Activated B cell treated with CpG ODN at 0.5 μM for 24 hours (primary cell): ENCODE measurements at regions of chr4 and their contacts with region 1.

Region 1: GRCh38 chr4:85423431-85423830 is 51.5 kb upstream of the ARHGAP24 start:
- DNase-seq: no peak
- ATAC-seq: peak; percentile 73
- H3K4me3 Mint-ChIP-seq: no peak overlapping the region
- H3K27ac Mint-ChIP-seq: no peak overlapping the region
- H3K4me1 Mint-ChIP-seq: peaks cover 16% of the 10 kb centered on the region
- H3K27me3 Mint-ChIP-seq: no peaks in the 10 kb centered on the region
- CTCF ChIP-seq: no peak

Region 2: DNA sequence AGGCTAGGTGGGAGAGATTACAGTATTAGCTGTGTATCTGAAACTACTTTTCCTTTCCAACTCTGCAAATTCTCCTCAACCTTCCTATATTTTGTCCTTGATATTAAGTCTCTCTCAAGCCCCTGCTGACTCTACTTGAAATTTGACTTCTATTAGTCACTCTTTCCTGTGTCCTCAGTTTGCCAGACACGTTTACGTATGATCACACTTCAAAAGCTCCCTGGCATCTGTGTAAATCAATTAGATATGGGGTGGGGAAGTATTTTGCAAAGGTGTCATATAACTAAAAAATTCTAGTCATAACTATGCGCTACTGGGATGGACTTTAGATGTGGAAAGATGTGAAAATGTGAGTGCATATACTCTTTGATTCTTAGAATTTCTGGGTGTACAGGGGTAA is 15.9 kb before region 1 on chr4:
- CTCF ChIA-PET with region 1: no interaction called
- POLR2A ChIA-PET with region 1: interaction called, 3 read pairs
- intact Hi-C with region 1: loop called (anchors 2 kb)
- DNase-seq: no peak
- ATAC-seq: no peak
- H3K4me3 Mint-ChIP-seq: no peak overlapping the region
- H3K27ac Mint-ChIP-seq: no peak overlapping the region
- H3K4me1 Mint-ChIP-seq: no peaks in the 10 kb centered on the region
- H3K27me3 Mint-ChIP-seq: no peaks in the 10 kb centered on the region
- CTCF ChIP-seq: no peak

Region 3: DNA sequence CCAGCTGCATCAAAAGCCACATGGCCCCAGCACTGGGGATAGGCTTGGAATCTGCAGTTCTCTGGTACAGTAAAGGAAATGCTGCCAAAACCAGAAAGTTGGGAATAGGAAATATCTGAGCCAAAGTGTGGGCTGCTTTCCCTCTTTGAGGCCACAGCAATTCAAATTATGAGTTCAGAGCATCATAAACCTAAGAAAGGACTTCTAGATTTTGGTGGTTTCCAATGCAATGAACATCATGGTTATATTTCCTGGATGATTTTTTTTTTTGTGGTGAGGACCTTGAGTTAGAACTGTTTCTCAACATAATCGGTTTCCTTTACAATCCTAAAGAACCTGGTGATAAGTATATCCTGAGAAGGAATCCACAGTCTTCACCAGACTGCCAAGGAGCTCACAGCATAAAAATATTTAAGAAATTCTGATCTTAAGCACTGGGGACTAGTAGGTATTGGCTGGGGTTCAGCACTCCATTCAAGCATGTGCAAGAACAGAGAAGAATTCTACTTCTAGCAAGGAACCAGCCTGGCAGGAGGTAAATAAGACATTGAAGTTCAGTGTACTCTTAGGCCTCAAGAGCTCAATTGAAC is 21.7 kb after region 1 on chr4:
- CTCF ChIA-PET with region 1: no interaction called
- POLR2A ChIA-PET with region 1: no interaction called
- intact Hi-C with region 1: no loop called
- DNase-seq: no peak
- ATAC-seq: no peak
- H3K4me3 Mint-ChIP-seq: no peak overlapping the region
- H3K27ac Mint-ChIP-seq: no peak overlapping the region
- H3K4me1 Mint-ChIP-seq: peaks cover 38% of the 10 kb centered on the region
- H3K27me3 Mint-ChIP-seq: no peaks in the 10 kb centered on the region
- CTCF ChIP-seq: no peak

Region 4: DNA sequence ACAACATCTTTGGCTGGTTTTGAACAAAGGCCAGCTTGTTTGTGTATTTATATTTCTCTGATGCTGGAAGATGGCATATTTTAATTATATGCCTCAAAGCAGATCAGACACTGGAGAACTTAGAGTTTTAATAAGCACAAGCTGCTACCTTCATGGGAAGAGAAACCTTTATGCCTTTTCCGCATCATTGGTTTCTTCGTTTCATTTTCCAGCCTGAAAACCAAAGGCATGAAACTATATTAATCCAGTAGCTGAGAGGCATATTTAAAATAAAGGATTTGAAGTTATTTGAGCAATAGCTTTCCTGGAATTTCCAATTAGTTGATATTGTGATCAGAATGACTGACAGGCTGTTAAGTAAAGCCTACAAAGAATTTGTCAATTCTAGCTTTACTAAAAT is 192.5 kb after region 1 on chr4:
- CTCF ChIA-PET with region 1: no interaction called
- POLR2A ChIA-PET with region 1: no interaction called
- intact Hi-C with region 1: no loop called
- DNase-seq: no peak
- ATAC-seq: no peak
- H3K4me3 Mint-ChIP-seq: no peak overlapping the region
- H3K27ac Mint-ChIP-seq: no peak overlapping the region
- H3K4me1 Mint-ChIP-seq: peaks cover 15% of the 10 kb centered on the region
- H3K27me3 Mint-ChIP-seq: no peaks in the 10 kb centered on the region
- CTCF ChIP-seq: no peak

Region 5: GRCh38 chr4:85790582-85790981 is 367.2 kb after region 1 on chr4:
- CTCF ChIA-PET with region 1: no interaction called
- POLR2A ChIA-PET with region 1: no interaction called
- intact Hi-C with region 1: loop called (anchors 5 kb)
- DNase-seq: no peak
- ATAC-seq: no peak
- H3K4me3 Mint-ChIP-seq: no peak overlapping the region
- H3K27ac Mint-ChIP-seq: no peak overlapping the region
- H3K4me1 Mint-ChIP-seq: peaks cover 40% of the 10 kb centered on the region
- H3K27me3 Mint-ChIP-seq: no peaks in the 10 kb centered on the region
- CTCF ChIP-seq: no peak

Region 6: DNA sequence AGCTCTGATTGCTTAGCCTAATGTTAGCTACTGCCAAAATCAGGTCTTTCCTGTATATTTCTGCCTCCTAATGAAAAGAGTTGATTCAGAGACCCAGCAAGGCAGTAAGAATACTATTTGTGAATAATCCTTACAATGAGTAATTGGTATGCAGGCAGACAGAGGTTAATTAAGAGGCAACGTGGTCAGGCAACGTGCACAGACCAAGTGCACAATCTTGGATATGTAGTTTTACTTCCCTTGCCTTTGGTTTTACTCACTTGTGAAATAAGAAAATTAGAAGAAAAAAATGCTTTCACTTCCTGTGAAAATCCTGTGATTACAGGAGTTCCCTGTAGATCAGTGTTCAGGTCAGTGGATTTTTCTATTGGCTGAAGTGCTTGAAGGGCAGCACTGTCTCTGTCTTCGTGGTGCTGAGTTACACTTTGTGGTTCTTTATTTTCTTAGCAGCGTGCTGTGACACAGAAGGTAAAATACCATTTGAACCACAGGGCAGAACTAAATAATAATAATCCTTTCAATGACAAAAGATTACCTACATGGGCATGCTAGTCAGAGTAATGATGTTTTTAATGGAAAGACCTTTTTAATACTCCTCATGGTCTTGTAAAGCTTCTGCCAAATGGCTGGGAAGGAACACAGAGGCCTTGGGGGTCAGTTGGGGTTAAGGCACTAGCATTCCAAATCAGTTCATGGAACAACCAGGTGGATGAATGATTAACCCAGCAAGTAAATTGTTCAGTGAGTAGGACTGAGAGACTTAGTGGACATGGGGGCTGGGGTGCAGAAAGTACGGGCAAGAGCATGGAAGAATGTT is 505.6 kb after region 1 on chr4:
- CTCF ChIA-PET with region 1: no interaction called
- POLR2A ChIA-PET with region 1: no interaction called
- intact Hi-C with region 1: no loop called
- DNase-seq: no peak
- ATAC-seq: peak; percentile 28
- H3K4me3 Mint-ChIP-seq: no peak overlapping the region
- H3K27ac Mint-ChIP-seq: peak overlapping the region; percentile 37
- H3K4me1 Mint-ChIP-seq: peaks cover 38% of the 10 kb centered on the region
- H3K27me3 Mint-ChIP-seq: no peaks in the 10 kb centered on the region
- CTCF ChIP-seq: no peak